ENCODE measurements at regions of chr9 and their contacts with region 1.

Region 1: GRCh38 chr9:34376596-34377403 is at the start of gene MYORG:
- DNase-seq: peak; percentile 99
- H3K4me3 Mint-ChIP-seq: peak within 1 kb of the TSS; percentile 78
- H3K27ac Mint-ChIP-seq: no peak within 1 kb of the TSS
- H3K4me1 Mint-ChIP-seq: peaks cover 30% of the 10 kb centered on the region
- H3K27me3 Mint-ChIP-seq: no peaks in the 10 kb centered on the region
- total RNA-seq, gene MYORG: 1.9 to 2.9 TPM

Region 2: GRCh38 chr9:34048923-34049697 is 327.7 kb before region 1 on chr9:
- CTCF ChIA-PET with region 1: interaction called, 7 read pairs
- POLR2A ChIA-PET with region 1: interaction called, 3 read pairs
- intact Hi-C with region 1: loop called (anchors 1 kb)
- DNase-seq: peak; percentile 97
- H3K4me3 Mint-ChIP-seq: peak overlapping the region; percentile 89
- H3K27ac Mint-ChIP-seq: peak overlapping the region; percentile 99
- H3K4me1 Mint-ChIP-seq: peaks cover 32% of the 10 kb centered on the region
- H3K27me3 Mint-ChIP-seq: no peaks in the 10 kb centered on the region

Region 3: DNA sequence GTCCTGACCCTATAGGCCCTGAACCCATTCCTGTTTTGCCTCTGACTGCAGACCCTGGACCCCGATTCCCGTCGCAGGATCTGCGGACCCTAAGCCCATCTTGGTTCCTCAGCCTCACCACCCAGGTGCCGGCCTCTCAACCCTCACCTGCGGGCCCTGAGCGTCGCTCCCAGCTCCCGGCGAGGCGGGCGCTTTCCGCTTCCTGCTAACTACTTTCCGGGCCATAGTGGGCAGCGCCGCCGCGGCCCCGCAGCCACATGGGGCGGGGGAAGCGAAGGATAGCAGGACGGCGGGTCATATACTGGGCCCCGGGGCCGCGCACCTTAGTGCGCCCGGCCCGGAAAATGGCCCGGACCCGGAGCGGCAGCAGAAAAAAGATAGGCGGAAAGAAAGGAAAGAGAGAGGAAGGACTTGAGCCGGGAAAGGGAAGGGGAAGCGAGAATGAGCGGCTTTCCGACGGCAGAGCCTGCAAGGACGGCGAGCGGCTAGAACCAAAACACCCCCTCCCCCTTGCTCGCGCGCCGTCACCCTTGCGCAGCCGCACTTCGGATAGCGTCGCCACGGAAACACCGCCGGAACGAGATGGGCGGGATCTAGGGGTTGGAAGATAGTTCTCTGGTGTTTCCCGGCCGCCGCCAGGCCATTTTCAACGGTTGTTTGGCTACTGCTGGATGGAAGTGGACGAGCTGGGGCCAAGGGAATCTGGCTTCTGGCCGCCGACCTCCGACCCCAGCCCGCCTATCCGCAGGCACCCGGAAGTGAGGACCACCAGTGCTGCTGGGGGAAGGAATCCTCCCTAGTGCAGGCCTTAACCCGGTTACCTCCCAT is 250.4 kb before region 1 on chr9 and contains the start of gene DCAF12:
- CTCF ChIA-PET with region 1: interaction called, 3 read pairs
- POLR2A ChIA-PET with region 1: no interaction called
- intact Hi-C with region 1: loop called (anchors 1 kb)
- DNase-seq: peak; percentile 94
- H3K4me3 Mint-ChIP-seq: peak within 1 kb of the TSS; percentile 98
- H3K27ac Mint-ChIP-seq: peak within 1 kb of the TSS; percentile 94
- H3K4me1 Mint-ChIP-seq: peaks cover 35% of the 10 kb centered on the region
- H3K27me3 Mint-ChIP-seq: no peaks in the 10 kb centered on the region
- total RNA-seq, gene DCAF12: 32.5 to 35.4 TPM

Region 4: DNA sequence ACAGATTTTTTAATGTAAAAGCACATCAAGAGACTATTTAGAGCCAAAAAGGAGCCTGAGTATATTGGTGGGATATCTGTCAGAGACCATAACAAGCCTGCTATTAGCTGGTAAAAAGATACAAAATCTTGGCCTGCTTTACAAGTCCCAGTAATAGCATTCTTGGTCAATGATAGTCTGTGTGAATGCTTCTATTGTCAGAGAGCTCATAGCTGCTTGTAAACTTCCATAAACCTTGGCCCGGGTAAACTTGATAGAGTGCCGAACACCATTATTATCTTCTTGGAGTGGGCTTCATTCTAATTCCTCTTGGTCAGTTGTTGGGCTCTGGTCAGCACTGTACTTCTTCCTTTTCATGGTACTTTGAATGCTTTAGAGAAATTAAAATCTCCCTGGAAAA is 134.0 kb before region 1 on chr9:
- CTCF ChIA-PET with region 1: no interaction called
- POLR2A ChIA-PET with region 1: no interaction called
- intact Hi-C with region 1: no loop called
- DNase-seq: no peak
- H3K4me3 Mint-ChIP-seq: no peak overlapping the region
- H3K27ac Mint-ChIP-seq: no peak overlapping the region
- H3K4me1 Mint-ChIP-seq: peaks cover 18% of the 10 kb centered on the region
- H3K27me3 Mint-ChIP-seq: no peaks in the 10 kb centered on the region

Region 5: DNA sequence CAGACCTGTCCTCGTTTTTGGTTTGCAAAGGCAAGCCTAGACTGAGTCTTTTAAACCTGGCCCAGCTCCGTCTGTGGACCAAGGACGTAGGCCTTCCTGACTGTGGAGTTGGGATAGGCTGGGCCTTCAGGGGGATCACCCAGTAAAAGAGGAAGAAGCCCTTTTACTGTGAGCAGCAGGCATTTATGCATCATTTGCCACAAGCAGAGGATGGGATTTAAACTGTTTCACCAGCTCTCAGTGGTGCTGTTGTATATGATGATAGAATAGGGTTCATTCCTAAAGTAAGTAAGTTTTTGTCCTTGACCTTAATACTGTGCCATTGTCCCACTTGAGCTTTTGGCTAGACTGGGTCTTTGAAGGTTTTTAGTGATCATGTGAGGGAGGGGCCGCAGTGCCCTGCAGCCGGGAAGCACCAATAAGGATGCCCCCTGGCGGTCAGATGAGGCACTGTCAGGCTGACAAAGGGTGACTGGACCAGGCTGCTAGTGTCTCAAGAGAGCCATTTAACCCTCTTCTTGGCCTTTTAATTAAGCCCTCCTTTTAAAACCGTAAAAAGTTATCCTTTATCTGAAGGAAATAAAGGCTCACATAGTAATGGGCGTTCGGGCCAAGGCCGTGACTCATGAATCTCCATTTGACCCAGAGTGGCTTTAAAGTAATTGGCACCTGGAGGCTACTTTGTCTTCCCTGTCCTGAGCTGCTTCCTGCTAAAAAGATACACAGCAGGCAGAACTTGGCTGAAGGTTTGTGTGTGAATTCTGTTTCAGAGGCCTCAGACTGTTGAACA is 123.9 kb before region 1 on chr9:
- CTCF ChIA-PET with region 1: interaction called, 9 read pairs
- POLR2A ChIA-PET with region 1: no interaction called
- intact Hi-C with region 1: loop called (anchors 1 kb)
- DNase-seq: peak; percentile 78
- H3K4me3 Mint-ChIP-seq: no peak overlapping the region
- H3K27ac Mint-ChIP-seq: no peak overlapping the region
- H3K4me1 Mint-ChIP-seq: no peaks in the 10 kb centered on the region
- H3K27me3 Mint-ChIP-seq: no peaks in the 10 kb centered on the region

Region 6: GRCh38 chr9:34458013-34458958 is 81.5 kb after region 1 on chr9 and contains the starts of genes DNAI1 and FAM219A:
- CTCF ChIA-PET with region 1: interaction called, 3 read pairs
- POLR2A ChIA-PET with region 1: interaction called, 5 read pairs
- intact Hi-C with region 1: loop called (anchors 2 kb)
- DNase-seq: peak; percentile 99
- H3K4me3 Mint-ChIP-seq: peak within 1 kb of the TSS; percentile 86
- H3K27ac Mint-ChIP-seq: no peak within 1 kb of the TSS
- H3K4me1 Mint-ChIP-seq: peaks cover 40% of the 10 kb centered on the region
- H3K27me3 Mint-ChIP-seq: peaks cover 5% of the 10 kb centered on the region
- total RNA-seq, gene DNAI1: 0.19 to 0.69 TPM
- total RNA-seq, gene FAM219A: 13.3 to 13.8 TPM

Region 7: DNA sequence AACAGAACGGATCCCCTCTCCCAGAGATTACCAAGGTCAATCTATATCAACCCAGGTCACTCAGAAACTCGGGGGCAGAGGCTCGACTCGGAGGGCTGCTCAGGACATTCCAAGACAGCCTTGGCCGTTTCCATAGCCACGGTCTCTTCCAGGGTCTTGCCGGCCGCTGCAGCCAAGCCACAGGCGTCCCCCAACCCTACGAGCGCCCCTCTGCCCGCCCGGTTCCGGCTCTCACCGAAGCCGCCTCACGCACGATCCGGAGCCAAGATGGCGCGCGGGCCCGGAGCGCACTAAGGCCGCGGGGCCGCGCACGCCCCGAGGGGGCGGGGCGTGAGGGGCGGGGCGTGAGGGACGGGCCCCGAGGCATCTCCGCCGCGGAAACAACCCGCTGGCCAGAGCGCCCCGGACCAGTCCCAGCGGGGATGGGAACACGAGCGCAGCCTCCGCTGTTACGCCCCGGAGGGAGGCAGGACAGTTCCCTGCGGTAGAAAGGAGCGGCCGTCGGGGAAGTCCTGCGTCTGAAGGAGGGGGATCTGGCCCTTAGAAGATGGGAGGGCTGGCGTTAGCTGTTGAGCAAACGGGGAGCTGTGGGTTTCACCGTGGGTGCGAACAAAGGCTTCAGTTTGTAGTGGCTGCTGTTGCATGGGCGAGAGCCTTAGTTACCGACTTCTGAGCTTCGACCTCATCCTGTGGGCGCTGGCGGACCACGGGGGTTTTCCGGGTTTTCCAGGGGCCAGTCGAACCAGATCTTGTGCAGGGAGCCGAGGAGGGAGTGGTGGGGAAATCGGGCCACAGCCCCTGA is 235.2 kb after region 1 on chr9 and contains the start of gene RPP25L:
- CTCF ChIA-PET with region 1: interaction called, 3 read pairs
- POLR2A ChIA-PET with region 1: no interaction called
- intact Hi-C with region 1: loop called (anchors 2 kb)
- DNase-seq: peak; percentile 88
- H3K4me3 Mint-ChIP-seq: peak within 1 kb of the TSS; percentile 89
- H3K27ac Mint-ChIP-seq: peak within 1 kb of the TSS; percentile 85
- H3K4me1 Mint-ChIP-seq: peaks cover 21% of the 10 kb centered on the region
- H3K27me3 Mint-ChIP-seq: no peaks in the 10 kb centered on the region
- total RNA-seq, gene RPP25L: 29.3 to 31.1 TPM

Measured in activated CD4-positive, alpha-beta memory T cell treated with anti-CD3 and anti-CD28 coated beads for 36 hours (primary cell).